CD4-positive, alpha-beta T cell (primary cell): ENCODE measurements at regions of chr20 and their contacts with region 1.

Region 1: DNA sequence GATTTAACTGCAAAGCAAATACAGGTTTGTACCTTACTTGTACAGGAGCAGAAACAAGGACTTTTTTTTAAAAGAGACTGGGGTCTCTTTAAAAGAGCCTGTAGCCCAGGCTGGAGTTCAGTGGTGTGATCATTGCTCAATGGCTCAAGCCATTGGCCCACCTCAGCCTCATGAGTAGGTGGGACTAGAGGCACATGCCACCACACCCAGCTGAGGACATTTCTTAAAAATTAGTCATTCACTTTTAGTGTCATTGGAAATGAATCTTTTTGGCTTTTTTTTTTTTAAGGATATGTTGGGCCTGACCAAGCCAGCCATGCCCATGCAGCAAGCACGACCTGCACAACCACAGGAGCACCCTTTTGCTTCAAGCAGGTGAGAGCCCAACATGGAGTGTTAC is 16.9 kb downstream of the SEC23B start:
- DNase-seq: no peak
- ATAC-seq: no peak
- H3K4me3 ChIP-seq: no peak overlapping the region
- H3K4me3 Mint-ChIP-seq: no peak overlapping the region
- H3K27ac ChIP-seq: no peak overlapping the region
- H3K27ac Mint-ChIP-seq: no peak overlapping the region
- H3K4me1 ChIP-seq: no peaks in the 10 kb centered on the region
- H3K4me1 Mint-ChIP-seq: no peaks in the 10 kb centered on the region
- H3K27me3 ChIP-seq: no peaks in the 10 kb centered on the region
- H3K27me3 Mint-ChIP-seq: no peaks in the 10 kb centered on the region
- CTCF ChIP-seq: no peak

Region 2: DNA sequence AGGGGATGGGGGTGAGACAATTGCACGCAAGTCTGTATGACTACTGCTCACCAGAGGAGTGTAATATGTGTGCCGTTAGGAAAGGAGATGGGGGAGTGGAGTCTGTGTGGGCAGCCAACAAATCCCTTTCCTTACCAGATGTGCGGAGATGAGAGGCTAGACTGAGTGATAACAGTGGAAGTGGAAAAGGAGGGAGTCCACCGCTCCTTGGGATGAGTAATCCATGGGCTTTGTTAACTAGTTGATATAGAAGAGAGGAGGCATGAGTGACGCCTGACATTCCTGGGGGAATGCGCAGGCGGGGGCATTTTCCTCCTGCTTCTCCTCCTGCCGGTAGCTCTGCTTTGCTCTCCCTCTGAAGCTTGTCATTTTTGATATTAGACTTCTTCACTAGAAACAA is 29.1 kb after region 1 on chr20:
- CTCF ChIA-PET with region 1: no interaction called
- POLR2A ChIA-PET with region 1: no interaction called
- intact Hi-C with region 1: loop called in 1 of 2 experiments (anchors 2 kb)
- DNase-seq: no peak
- ATAC-seq: no peak
- H3K4me3 ChIP-seq: no peak overlapping the region
- H3K4me3 Mint-ChIP-seq: no peak overlapping the region
- H3K27ac ChIP-seq: no peak overlapping the region
- H3K27ac Mint-ChIP-seq: no peak overlapping the region
- H3K4me1 ChIP-seq: no peaks in the 10 kb centered on the region
- H3K4me1 Mint-ChIP-seq: no peaks in the 10 kb centered on the region
- H3K27me3 ChIP-seq: no peaks in the 10 kb centered on the region
- H3K27me3 Mint-ChIP-seq: no peaks in the 10 kb centered on the region
- CTCF ChIP-seq: no peak